ENCODE measurements at regions of chr10 and their contacts with region 1.

Region 1: GRCh38 chr10:130190055-130190736 is 54.0 kb downstream of the GLRX3 start:
- DNase-seq: peak; percentile 90
- ATAC-seq: peak; percentile 96
- H3K4me3 ChIP-seq: peak overlapping the region in 4 of 5 experiments; percentile 21 to 57 (median 51)
- H3K4me3 Mint-ChIP-seq: peak overlapping the region; percentile 45
- H3K27ac ChIP-seq: no peak overlapping the region
- H3K27ac Mint-ChIP-seq: no peak overlapping the region
- H3K4me1 ChIP-seq: peaks cover 6 to 8% of the 10 kb centered on the region in 2 donors
- H3K4me1 Mint-ChIP-seq: peaks cover 8% of the 10 kb centered on the region
- H3K27me3 ChIP-seq: peaks cover 0 to 8% (median 1%) of the 10 kb centered on the region in 4 experiments
- H3K27me3 Mint-ChIP-seq: peaks cover 10% of the 10 kb centered on the region
- CTCF ChIP-seq: peak; percentile 100

Region 2: GRCh38 chr10:130136226-130137089 is 53.7 kb before region 1 on chr10 and contains the start of gene GLRX3:
- CTCF ChIA-PET with region 1: no interaction called
- POLR2A ChIA-PET with region 1: no interaction called
- intact Hi-C with region 1: loop called (anchors 2 kb)
- DNase-seq: peak; percentile 93
- ATAC-seq: peak; percentile 91
- H3K4me3 ChIP-seq: peak within 1 kb of the TSS in 4 of 5 experiments; percentile 44 to 91 (median 74)
- H3K4me3 Mint-ChIP-seq: peak within 1 kb of the TSS; percentile 95
- H3K27ac ChIP-seq: peak within 1 kb of the TSS; percentile 4 to 79
- H3K27ac Mint-ChIP-seq: peak within 1 kb of the TSS; percentile 89
- H3K4me1 ChIP-seq: peaks cover 35 to 36% of the 10 kb centered on the region in 2 donors
- H3K4me1 Mint-ChIP-seq: peaks cover 38% of the 10 kb centered on the region
- H3K27me3 ChIP-seq: peaks cover 0 to 10% (median 0%) of the 10 kb centered on the region in 4 experiments
- H3K27me3 Mint-ChIP-seq: peaks cover 13% of the 10 kb centered on the region
- CTCF ChIP-seq: no peak
- total RNA-seq, gene GLRX3: 45.4 and 47.6 TPM in 2 replicates